SK-N-SH (cell line): ENCODE measurements at regions of chr19 and their contacts with region 1.

Region 1: DNA sequence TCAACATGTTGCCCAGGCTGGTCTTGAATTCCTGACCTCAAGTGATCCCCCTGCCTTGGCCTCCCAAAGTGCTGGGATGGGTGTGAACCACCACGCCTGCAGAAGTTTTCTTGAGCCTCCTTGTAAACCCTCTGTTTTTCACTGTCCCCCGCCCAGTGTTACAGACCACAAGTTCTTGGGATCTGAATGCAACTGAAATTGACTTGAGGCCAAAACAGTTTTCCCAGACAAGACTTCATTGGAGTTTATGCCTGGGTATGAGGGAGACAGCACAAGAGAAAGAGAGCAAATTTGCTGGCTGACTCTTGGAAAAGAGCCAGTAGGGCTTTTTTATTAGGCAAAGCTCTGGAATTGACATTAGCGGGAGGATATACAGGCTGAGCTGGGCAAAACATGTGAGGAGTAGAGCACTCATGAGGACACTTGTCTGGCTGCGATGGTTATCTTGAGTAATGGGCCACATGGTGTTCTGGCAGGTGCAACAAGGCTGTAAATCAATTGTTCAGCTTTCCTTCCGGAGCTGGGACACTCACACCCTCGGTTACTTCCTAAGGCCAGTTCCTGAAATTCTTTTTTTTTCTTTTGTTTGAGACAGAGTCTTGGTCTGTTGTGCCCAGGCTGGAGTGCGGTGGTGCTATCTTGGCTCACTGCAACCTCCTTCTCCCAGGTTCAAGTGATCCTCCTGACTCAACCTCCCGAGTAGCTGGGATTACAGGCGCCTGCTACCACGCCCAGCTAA is 12.7 kb upstream of the HNRNPL start:
- DNase-seq: peak; percentile 81
- H3K4me3 ChIP-seq: no peak overlapping the region
- H3K27ac ChIP-seq: peak overlapping the region in 1 of 2 experiments; percentile 81; a peak in 2 of 4 replicates
- H3K4me1 ChIP-seq: peaks cover 0 to 10% of the 10 kb centered on the region in 2 experiments; a peak in 1 of 4 replicates
- H3K27me3 ChIP-seq: no peaks in the 10 kb centered on the region
- CTCF ChIP-seq: no peak
- EP300 ChIP-seq: peak in 1 of 2 experiments; percentile 97; a peak in 2 of 4 replicates
- RAD21 ChIP-seq: peak; percentile 41

Region 2: GRCh38 chr19:38831142-38831605 is 31.3 kb before region 1 on chr19:
- CTCF ChIA-PET with region 1: no interaction called
- POLR2A ChIA-PET with region 1: interaction called, 10 read pairs
- DNase-seq: peak; percentile 72
- H3K4me3 ChIP-seq: peak overlapping the region; percentile 60 to 64
- H3K27ac ChIP-seq: peak overlapping the region; percentile 89 to 91
- H3K4me1 ChIP-seq: peaks cover 9 to 35% of the 10 kb centered on the region in 2 experiments; a peak in 3 of 4 replicates
- H3K27me3 ChIP-seq: no peaks in the 10 kb centered on the region
- CTCF ChIP-seq: no peak
- EP300 ChIP-seq: no peak; a peak in 1 of 4 replicates
- RAD21 ChIP-seq: no peak

Region 3: DNA sequence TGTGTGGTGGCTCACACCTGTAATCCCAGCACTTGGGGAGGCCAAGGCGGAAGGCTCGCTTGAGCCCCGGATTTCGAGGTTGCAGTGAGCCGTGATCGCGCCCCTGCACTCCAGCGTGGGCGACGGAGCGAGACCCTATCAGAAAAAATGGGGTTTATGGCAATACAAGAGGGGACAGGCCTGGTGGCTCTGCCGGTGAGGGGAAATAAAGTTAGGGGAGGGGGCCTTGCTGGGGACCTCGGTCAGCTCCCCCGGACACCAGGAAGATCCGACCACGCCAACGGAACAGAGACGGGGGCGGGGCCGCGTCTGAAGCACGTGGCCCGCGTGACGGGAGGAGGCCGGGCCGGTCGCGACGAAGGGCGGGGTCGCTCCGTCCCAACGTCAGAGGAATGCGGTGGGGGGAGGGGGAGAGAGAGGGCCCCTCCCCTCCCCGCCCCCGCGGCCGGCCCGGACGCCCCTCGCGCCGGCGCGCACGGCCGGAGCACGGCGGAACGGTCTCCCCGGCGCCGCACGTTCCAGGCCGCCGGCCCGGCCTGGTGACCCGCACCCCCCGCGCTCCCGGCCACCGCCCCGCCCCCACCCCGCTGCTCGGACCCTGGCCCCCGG is 10.8 kb before region 1 on chr19:
- CTCF ChIA-PET with region 1: interaction called, 3 read pairs
- POLR2A ChIA-PET with region 1: interaction called, 10 read pairs
- DNase-seq: peak; percentile 95
- H3K4me3 ChIP-seq: peak overlapping the region; percentile 64 to 87
- H3K27ac ChIP-seq: peak overlapping the region; percentile 95 to 97
- H3K4me1 ChIP-seq: peaks cover 18 to 30% of the 10 kb centered on the region in 2 experiments; a peak in 1 of 4 replicates
- H3K27me3 ChIP-seq: no peaks in the 10 kb centered on the region
- CTCF ChIP-seq: no peak
- EP300 ChIP-seq: peak in 1 of 2 experiments; percentile 33; a peak in 1 of 4 replicates
- RAD21 ChIP-seq: no peak